ENCODE measurements at regions of chr10 and their contacts with region 1.

Region 1: GRCh38 chr10:77983384-77984341 is 45.7 kb downstream of the POLR3A start:
- DNase-seq: peak; percentile 49

Region 2: GRCh38 chr10:77927402-77928246 is 56.0 kb before region 1 on chr10:
- intact Hi-C with region 1: no loop called
- DNase-seq: no peak

Region 3: DNA sequence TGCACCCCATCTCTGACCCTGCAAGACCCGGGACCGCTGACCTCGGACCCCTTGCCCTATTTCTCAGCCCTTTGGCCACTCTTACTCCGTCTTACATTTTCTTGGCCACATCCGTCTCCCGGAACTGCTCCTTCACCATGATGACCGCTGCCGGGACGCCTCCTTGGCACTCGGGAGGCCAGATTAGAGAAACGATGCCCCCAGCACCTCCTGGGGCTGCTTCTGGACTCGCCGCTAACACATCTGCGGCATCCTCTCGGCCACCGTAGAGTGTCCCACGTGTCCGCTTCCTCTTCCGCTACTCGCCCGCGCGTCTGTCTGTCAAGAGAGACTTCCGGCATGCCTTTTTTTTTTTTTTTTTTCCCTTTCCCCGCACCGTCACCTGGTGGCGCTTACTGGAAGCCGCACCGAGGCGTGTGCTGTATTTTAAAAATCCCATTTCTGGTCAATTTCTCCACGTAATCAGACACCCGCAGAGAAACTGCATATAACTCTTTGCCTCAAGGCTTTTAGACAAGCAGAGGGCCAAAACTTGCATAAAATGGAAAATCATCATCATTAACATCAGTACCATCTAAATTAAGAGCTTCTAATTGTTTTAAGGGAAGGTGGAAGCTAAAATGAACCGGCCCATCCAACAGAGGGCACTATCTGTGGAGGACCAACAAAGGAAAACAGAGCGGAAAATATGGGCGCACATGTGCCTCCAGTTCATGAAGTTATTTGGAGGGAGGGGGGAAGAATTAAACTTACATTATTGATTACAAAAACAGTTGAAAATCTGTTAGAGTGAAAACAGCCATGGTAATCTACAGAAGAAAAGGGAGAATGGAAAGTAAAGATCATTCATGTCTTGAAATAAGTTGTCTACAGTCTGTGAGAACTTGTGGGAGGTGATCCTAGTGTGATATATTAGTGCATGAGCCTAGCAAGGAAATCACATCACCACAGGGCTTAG is 45.9 kb after region 1 on chr10 and contains the start of gene POLR3A:
- intact Hi-C with region 1: loop called (anchors 2 kb)
- DNase-seq: peak; percentile 95
- total RNA-seq, gene POLR3A: 9.9 TPM

Measured in cardiac septum (tissue), 1 donor.